ENCODE measurements at regions of chr7 and their contacts with region 1.

Region 1: DNA sequence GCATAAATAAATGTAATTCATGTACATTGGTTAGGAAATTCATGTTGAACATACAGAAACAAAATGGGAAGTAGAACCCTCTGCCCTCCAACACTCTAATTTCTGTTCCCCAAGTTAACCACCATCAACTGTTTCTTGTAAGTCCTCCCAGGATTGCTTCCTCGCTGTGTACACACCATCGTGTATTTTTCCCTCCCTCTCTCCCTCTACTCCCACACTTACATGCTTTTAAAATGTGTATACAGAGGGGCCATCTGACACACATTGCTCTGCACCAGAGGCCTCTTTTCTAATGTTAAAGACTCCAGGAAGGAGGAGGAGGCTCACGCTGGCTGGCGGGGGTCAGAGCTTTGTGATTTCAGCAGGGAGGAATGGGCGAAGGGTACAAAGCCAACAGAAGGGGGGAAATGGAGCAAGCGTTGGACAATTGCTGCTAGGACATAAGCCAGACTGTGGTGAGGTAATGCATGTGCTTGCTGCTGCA is 1.9 kb upstream of the EPHA1 start:
- DNase-seq: no peak
- H3K4me3 ChIP-seq: no peak overlapping the region
- H3K27ac ChIP-seq: no peak overlapping the region
- H3K4me1 ChIP-seq: peaks cover 12% of the 10 kb centered on the region
- H3K27me3 ChIP-seq: no peaks in the 10 kb centered on the region
- CTCF ChIP-seq: no peak

Region 2: DNA sequence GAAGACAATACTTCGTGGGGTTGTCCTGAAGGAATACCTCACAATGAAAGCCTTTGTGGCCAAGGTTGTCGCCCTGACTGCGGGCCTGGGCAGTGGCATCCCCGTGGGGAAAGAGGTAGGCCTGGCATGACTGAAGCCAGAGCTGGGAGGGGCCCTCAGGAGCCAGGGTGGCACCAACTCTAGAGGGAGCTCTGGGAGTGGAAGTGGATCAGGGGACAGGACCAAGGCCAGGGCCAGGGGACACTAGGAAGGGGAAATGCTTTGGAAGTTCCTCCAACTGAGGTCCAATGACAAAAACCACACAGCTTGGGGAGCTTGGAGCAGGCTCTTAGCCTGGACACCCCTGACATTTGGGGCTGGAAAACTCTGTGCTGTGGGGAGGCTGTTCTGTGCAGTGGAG is 88.8 kb before region 1 on chr7:
- intact Hi-C with region 1: loop called (anchors 5 kb)
- DNase-seq: peak; percentile 52
- H3K4me3 ChIP-seq: no peak overlapping the region
- H3K27ac ChIP-seq: no peak overlapping the region
- H3K4me1 ChIP-seq: no peaks in the 10 kb centered on the region
- H3K27me3 ChIP-seq: no peaks in the 10 kb centered on the region
- CTCF ChIP-seq: peak; percentile 18

Measured in colonic mucosa (tissue), 4 donors.